Activated T-helper 1 cell treated with anti-CD3 and anti-CD28 coated beads, Interleukin-12 subunit alpha, Interleukin-12 subunit beta, Interleukin-2, Interleukin-4 antibody, amounts not matched to agents 30 ng/mL and 10 ng/mL and 1 ng/mL, durations not matched to agents 14 hours and 24 hours and 36 hours (primary cell): ENCODE measurements at regions of chr3 and their contacts with region 1.

Region 1: GRCh38 chr3:156151824-156152428 is 31.5 kb downstream of the KCNAB1 start:
- DNase-seq: peak; percentile 11
- H3K4me3 Mint-ChIP-seq: no peak overlapping the region
- H3K27ac Mint-ChIP-seq: no peak overlapping the region
- H3K4me1 Mint-ChIP-seq: peaks cover 7% of the 10 kb centered on the region
- H3K27me3 Mint-ChIP-seq: peaks cover 7% of the 10 kb centered on the region

Region 2: DNA sequence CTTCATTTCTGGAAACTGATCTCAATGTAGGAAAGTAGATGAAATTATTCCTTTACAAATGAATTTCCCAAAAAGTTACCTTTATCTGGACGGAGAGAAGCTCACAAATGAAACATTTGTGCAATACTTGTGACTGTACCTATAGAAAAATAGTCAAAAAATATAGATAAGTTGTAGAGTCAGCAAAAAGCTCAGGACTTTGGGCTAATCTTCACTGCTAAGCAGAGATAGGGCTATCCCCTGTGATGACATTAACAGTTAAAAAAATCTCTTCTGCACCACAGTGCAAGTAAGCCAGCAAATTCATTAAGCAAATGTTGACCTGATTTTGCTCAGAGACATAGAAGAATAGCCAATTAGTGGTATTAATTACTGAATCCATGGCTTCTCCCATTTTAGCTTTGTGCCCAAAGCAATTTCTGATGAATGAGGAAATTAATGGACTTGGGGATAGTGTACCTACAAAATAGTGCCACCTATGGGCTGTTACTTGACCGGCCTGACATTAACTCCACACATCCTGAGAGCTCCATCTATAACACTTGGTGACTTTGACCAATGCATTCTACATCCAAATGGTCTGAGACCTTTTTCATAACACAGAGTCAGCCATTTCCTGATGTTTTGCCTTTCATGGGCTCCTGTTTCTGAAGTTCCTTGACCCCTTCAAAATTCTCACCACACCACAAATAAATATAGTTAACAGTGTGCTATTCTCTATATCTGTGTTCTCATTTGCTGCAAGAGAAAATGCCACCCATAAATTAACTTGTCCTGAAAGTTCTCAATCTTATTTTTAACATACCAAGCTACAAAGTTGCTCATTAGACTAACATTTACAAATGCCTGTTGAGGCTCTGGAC is 298.0 kb after region 1 on chr3:
- intact Hi-C with region 1: loop called (anchors 2 kb)
- DNase-seq: no peak
- H3K4me3 Mint-ChIP-seq: no peak overlapping the region
- H3K27ac Mint-ChIP-seq: no peak overlapping the region
- H3K4me1 Mint-ChIP-seq: no peaks in the 10 kb centered on the region
- H3K27me3 Mint-ChIP-seq: peaks cover 35% of the 10 kb centered on the region

Region 3: DNA sequence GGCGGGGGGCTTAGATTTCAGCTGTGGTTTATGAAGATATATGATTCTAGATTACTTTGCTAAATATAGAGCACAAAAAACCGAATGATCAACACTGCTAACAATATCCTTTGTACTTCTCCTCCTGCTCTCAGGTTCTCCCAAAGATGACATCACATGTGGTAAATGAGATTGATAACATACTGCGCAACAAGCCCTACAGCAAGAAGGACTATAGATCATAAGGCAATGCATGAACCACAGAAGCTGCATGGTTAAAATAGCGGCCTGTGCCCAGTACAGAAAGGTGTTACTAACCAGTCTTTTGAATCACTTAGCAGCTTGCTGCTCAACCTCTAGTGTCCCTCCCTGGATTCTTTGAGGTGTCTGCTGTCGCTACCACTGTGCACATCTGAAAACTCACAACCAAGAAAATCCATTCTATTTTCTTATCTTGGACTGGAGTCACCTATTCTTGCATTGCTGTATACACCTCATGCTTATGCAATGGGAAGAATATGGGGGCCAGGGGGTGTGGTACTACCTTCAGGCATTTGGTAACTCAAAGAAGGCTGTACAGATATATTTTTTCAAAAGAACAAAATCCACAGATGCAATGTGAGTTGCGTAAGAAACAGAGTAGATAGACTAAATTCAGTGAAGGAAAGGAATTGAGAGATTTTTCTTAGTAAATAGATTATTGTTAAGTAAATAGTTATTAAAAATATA is 384.8 kb after region 1 on chr3:
- intact Hi-C with region 1: loop called (anchors 1 kb)
- DNase-seq: no peak
- H3K4me3 Mint-ChIP-seq: no peak overlapping the region
- H3K27ac Mint-ChIP-seq: no peak overlapping the region
- H3K4me1 Mint-ChIP-seq: peaks cover 19% of the 10 kb centered on the region
- H3K27me3 Mint-ChIP-seq: no peaks in the 10 kb centered on the region

Region 4: DNA sequence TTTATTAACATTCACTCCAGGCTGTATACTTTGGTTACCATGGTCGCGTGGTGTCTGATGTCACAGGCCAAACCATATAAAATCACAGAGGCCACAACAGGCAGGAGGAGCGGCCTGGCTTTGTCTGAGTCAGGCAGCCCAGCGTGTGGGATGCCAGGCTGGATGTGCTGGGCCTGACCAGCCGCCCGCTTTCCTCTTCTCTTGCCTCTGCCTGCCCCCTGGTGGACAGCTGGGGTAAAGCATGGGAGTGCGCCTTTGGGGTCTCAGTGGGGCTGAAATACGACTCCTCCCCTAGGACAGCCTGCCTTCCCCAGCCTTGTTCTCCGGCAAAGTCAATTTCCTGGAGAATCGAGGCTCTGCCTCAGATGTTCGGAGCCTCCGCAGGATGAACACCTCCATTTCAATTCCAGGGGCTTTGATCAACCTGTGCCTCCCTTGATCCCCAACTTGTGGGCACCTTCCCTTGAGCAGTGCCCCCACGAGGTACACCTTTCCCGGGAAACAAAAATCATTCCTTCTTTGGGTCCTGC is 929.8 kb after region 1 on chr3:
- intact Hi-C with region 1: loop called (anchors 1 kb)
- DNase-seq: peak; percentile 73
- H3K4me3 Mint-ChIP-seq: no peak overlapping the region
- H3K27ac Mint-ChIP-seq: no peak overlapping the region
- H3K4me1 Mint-ChIP-seq: peaks cover 46% of the 10 kb centered on the region
- H3K27me3 Mint-ChIP-seq: no peaks in the 10 kb centered on the region

Region 5: DNA sequence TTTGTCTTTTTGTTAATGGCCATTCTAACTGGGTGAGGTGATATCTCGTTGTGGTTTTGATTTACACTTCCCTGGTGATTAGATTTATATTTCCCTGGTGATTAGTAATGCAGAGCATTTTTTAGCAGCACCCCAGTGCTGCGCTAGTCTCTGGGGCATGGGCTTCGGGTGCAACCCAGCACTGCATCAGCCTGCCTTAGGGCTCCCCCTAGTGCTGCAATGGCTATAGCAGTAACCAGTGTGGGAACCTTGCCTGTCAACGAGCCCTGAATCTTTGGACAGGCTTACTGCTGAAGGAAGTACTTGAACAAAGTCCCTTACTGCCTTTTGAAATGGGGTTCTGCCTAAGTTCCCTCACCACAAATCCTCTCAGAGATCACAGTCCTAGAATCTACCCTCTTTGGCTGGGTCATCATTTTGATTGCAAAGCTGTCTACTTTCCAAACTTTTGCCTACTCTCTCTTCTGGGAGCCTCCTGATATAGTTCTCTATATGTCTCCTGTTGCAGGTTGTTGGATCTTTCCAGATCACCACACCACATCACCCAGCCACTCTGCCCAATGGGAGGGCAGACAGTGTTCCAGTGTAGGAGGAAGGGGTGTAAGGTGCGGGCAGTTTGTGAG is 1087.3 kb after region 1 on chr3:
- intact Hi-C with region 1: loop called (anchors 1 kb)
- DNase-seq: peak; percentile 54
- H3K4me3 Mint-ChIP-seq: no peak overlapping the region
- H3K27ac Mint-ChIP-seq: no peak overlapping the region
- H3K4me1 Mint-ChIP-seq: peaks cover 6% of the 10 kb centered on the region
- H3K27me3 Mint-ChIP-seq: peaks cover 6% of the 10 kb centered on the region